B cell (primary cell): ENCODE measurements at regions of chr2 and their contacts with region 1.

Region 1: DNA sequence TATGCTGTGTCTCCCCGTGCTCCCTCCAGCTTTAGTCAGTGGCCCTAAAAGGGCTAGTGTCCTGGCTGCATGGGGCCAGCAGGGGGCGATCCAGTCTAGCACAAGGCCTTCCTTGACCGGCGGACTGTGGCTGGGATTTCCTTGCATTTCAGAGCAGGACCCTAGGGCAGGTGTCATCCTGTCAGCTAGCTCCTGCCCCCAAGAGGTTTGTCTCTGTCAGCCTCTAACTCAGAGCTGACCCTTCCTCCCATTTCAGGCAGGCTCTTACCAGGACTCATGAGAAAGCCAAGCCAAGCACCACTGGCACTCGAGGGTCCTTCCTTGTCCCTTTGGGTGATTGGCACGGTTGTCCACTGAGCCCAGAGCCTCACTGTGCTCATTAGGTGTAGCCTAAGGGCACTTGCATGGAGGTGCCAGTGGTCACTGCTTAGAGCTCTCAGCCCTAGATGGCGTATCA is 140.3 kb downstream of the RPIA start:
- DNase-seq: peak; percentile 87
- ATAC-seq: peak; percentile 76
- H3K4me3 ChIP-seq: peak overlapping the region in 4 of 5 experiments; percentile 31 to 66 (median 48)
- H3K4me3 Mint-ChIP-seq: peak overlapping the region; percentile 86
- H3K27ac ChIP-seq: peak overlapping the region; percentile 98 to 100
- H3K27ac Mint-ChIP-seq: peak overlapping the region; percentile 93
- H3K4me1 ChIP-seq: peaks cover 50 to 59% of the 10 kb centered on the region in 2 donors
- H3K4me1 Mint-ChIP-seq: peaks cover 65% of the 10 kb centered on the region
- H3K27me3 ChIP-seq: no peaks in the 10 kb centered on the region
- H3K27me3 Mint-ChIP-seq: no peaks in the 10 kb centered on the region
- CTCF ChIP-seq: peak; percentile 88

Region 2: DNA sequence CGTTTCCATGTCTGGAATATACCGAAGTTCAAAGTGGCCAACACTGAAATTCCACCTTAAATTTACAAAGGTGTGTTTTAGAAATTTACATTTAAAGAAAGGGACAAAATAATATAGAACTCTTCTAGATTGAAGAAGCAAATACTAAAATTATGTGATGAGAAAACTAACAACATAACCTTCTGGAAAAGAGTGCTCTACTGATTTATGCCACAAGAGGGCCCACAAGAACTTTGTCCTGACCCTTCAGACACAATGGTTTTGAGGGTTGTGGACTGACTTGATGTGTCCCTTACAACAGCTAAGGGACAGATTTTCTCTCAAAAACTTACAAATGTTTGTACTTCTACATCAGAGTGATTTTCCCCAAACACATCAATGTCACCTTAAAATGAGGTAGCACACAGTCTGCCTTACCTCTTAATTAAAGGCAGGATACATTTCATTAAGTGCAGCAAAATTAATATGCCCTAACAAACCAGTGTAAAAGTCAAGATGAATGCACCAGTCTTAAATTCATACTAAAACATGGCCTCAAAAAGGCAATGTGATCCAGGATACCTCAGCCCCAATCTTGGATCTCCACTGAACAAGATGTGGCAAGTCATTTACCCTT is 240.7 kb before region 1 on chr2:
- CTCF ChIA-PET with region 1: no interaction called
- POLR2A ChIA-PET with region 1: no interaction called
- intact Hi-C with region 1: no loop called
- DNase-seq: peak; percentile 81
- ATAC-seq: peak; percentile 95
- H3K4me3 ChIP-seq: no peak overlapping the region
- H3K4me3 Mint-ChIP-seq: no peak overlapping the region
- H3K27ac ChIP-seq: peak overlapping the region in 1 of 2 donors; percentile 45
- H3K27ac Mint-ChIP-seq: peak overlapping the region; percentile 87
- H3K4me1 ChIP-seq: peaks cover 11 to 14% of the 10 kb centered on the region in 2 donors
- H3K4me1 Mint-ChIP-seq: peaks cover 25% of the 10 kb centered on the region
- H3K27me3 ChIP-seq: no peaks in the 10 kb centered on the region
- H3K27me3 Mint-ChIP-seq: no peaks in the 10 kb centered on the region
- CTCF ChIP-seq: peak; percentile 80

Region 3: GRCh38 chr2:88739985-88740600 is 91.7 kb before region 1 on chr2:
- CTCF ChIA-PET with region 1: interaction called, 23 read pairs
- POLR2A ChIA-PET with region 1: no interaction called
- intact Hi-C with region 1: loop called (anchors 1 kb)
- DNase-seq: peak; percentile 84
- ATAC-seq: peak; percentile 92
- H3K4me3 ChIP-seq: no peak overlapping the region
- H3K4me3 Mint-ChIP-seq: no peak overlapping the region
- H3K27ac ChIP-seq: no peak overlapping the region
- H3K27ac Mint-ChIP-seq: peak overlapping the region; percentile 3
- H3K4me1 ChIP-seq: peaks cover 0 to 5% of the 10 kb centered on the region in 2 donors
- H3K4me1 Mint-ChIP-seq: peaks cover 3% of the 10 kb centered on the region
- H3K27me3 ChIP-seq: no peaks in the 10 kb centered on the region
- H3K27me3 Mint-ChIP-seq: no peaks in the 10 kb centered on the region
- CTCF ChIP-seq: peak; percentile 96

Region 4: GRCh38 chr2:88845772-88846661 is 14.2 kb after region 1 on chr2:
- CTCF ChIA-PET with region 1: interaction called, 577 read pairs
- POLR2A ChIA-PET with region 1: interaction called, 509 read pairs
- intact Hi-C with region 1: no loop called
- DNase-seq: peak; percentile 89
- ATAC-seq: peak; percentile 89
- H3K4me3 ChIP-seq: peak overlapping the region in 1 of 5 experiments; percentile 29
- H3K4me3 Mint-ChIP-seq: peak overlapping the region; percentile 76
- H3K27ac ChIP-seq: peak overlapping the region; percentile 98 to 100
- H3K27ac Mint-ChIP-seq: peak overlapping the region; percentile 96
- H3K4me1 ChIP-seq: peaks cover 96 to 99% of the 10 kb centered on the region in 2 donors
- H3K4me1 Mint-ChIP-seq: peaks cover 93% of the 10 kb centered on the region
- H3K27me3 ChIP-seq: no peaks in the 10 kb centered on the region
- H3K27me3 Mint-ChIP-seq: no peaks in the 10 kb centered on the region
- CTCF ChIP-seq: no peak

Region 5: GRCh38 chr2:88874063-88874657 is 42.3 kb after region 1 on chr2:
- CTCF ChIA-PET with region 1: interaction called, 114 read pairs
- POLR2A ChIA-PET with region 1: interaction called, 5 read pairs
- intact Hi-C with region 1: no loop called
- DNase-seq: peak; percentile 70
- ATAC-seq: no peak
- H3K4me3 ChIP-seq: no peak overlapping the region
- H3K4me3 Mint-ChIP-seq: no peak overlapping the region
- H3K27ac ChIP-seq: no peak overlapping the region
- H3K27ac Mint-ChIP-seq: no peak overlapping the region
- H3K4me1 ChIP-seq: peaks cover 15 to 21% of the 10 kb centered on the region in 2 donors
- H3K4me1 Mint-ChIP-seq: peaks cover 27% of the 10 kb centered on the region
- H3K27me3 ChIP-seq: no peaks in the 10 kb centered on the region
- H3K27me3 Mint-ChIP-seq: no peaks in the 10 kb centered on the region
- CTCF ChIP-seq: peak; percentile 64

Region 6: DNA sequence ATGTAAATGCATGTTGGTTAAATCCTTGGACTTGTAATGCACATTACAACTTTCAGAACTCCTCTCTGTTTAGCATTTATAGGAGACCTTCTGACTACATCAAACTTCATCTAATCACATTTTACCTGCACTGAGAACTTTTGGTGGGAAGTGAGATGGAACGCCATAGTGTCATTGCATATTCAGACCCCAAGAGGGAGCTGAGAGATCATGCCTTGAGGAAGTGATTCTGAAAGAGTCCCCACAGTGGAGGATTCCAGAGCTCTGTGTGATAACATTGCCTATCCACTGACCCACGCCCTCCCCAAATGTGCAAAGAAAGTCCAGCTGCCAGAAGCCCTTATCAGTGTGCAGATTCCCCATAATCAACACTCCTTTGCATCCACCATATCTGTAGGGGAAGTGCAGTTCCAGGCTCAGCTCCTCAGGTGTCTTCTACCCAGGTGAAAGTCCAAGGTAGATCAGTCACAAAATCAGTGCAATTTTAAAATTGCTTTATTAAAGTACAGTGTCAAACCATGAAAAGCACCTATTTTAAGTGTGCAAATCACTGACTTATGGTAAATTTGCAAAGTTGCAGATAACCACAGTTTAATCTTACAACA is 72.0 kb after region 1 on chr2:
- CTCF ChIA-PET with region 1: interaction called, 10 read pairs
- POLR2A ChIA-PET with region 1: no interaction called
- intact Hi-C with region 1: no loop called
- DNase-seq: peak; percentile 61
- ATAC-seq: peak; percentile 67
- H3K4me3 ChIP-seq: no peak overlapping the region
- H3K4me3 Mint-ChIP-seq: no peak overlapping the region
- H3K27ac ChIP-seq: no peak overlapping the region
- H3K27ac Mint-ChIP-seq: no peak overlapping the region
- H3K4me1 ChIP-seq: no peaks in the 10 kb centered on the region
- H3K4me1 Mint-ChIP-seq: peaks cover 4% of the 10 kb centered on the region
- H3K27me3 ChIP-seq: no peaks in the 10 kb centered on the region
- H3K27me3 Mint-ChIP-seq: no peaks in the 10 kb centered on the region
- CTCF ChIP-seq: peak; percentile 62

Region 7: GRCh38 chr2:88950010-88950409 is 118.2 kb after region 1 on chr2:
- CTCF ChIA-PET with region 1: no interaction called
- POLR2A ChIA-PET with region 1: interaction called, 4 read pairs
- intact Hi-C with region 1: loop called (anchors 1 kb)
- DNase-seq: peak; percentile 34
- ATAC-seq: no peak
- H3K4me3 ChIP-seq: no peak overlapping the region
- H3K4me3 Mint-ChIP-seq: no peak overlapping the region
- H3K27ac ChIP-seq: no peak overlapping the region
- H3K27ac Mint-ChIP-seq: no peak overlapping the region
- H3K4me1 ChIP-seq: no peaks in the 10 kb centered on the region
- H3K4me1 Mint-ChIP-seq: peaks cover 3% of the 10 kb centered on the region
- H3K27me3 ChIP-seq: no peaks in the 10 kb centered on the region
- H3K27me3 Mint-ChIP-seq: peaks cover 3% of the 10 kb centered on the region
- CTCF ChIP-seq: peak; percentile 32